ENCODE measurements at regions of chrX and their contacts with region 1.

Region 1: DNA sequence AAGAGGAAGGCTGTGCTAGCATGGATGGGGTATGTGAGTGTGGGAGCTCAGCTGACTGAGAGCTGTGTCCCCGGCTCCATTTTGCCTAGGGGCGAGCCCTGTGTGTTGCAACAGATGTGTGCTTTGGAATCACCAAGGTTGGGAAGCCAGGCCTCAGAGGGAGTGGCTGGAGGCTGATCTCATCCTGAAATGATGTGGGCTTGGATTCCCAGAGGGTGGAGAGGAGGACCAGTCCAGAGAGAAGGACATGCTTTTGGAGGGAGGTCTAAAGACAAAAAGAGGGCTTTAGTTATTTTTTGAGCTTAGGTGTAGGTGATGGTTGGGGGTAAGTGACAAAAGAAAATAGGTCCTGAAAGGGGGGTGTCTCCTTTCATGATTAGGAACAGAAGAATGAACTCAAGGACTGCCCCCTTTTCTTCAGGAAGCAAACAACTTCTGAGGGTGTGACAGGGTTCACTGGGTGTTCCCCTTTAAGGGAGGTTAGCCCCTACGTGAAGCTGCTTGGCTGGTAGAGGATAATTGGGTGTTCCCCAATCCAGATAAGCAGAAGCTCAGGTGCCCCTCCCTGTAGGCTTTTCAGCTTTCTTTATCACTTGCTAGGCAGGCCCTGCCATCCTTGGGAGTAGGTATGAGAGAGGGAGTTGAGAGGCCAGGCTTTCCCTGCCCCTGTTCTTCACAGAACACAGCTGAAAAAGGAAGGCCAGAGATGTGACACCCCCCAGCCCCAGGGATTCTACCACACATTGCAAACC is 44.0 kb downstream of the RTL9 start:
- DNase-seq: peak; percentile 77 to 86
- H3K4me3 ChIP-seq: peak overlapping the region; percentile 6; the same call in 1 of the 2 replicates
- H3K27ac ChIP-seq: peak overlapping the region; percentile 70
- H3K4me1 ChIP-seq: peaks cover 60% of the 10 kb centered on the region
- H3K27me3 ChIP-seq: no peaks in the 10 kb centered on the region
- CTCF ChIP-seq: no peak

Region 2: DNA sequence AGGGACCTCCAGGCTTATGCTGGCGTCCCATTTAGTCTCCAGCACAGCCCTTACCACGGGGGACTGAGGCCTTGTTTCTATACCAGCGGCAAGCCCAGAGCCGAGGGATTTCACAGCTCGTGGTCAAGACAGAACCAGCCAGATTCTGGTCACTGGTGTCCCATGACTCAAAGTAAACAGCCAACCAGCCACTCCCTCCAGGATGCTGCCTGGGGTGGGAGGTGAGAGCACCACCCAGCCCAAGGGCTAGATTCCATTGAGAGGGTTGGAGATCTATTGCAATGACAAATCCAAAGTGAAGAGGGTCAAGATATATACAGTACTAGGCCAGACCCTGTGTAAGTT is 228.8 kb before region 1 on chrX:
- CTCF ChIA-PET with region 1: no interaction called
- POLR2A ChIA-PET with region 1: no interaction called
- intact Hi-C with region 1: loop called (anchors 1 kb)
- DNase-seq: peak; percentile 77 to 79
- H3K4me3 ChIP-seq: no peak overlapping the region
- H3K27ac ChIP-seq: peak overlapping the region; percentile 44
- H3K4me1 ChIP-seq: peaks cover 27% of the 10 kb centered on the region
- H3K27me3 ChIP-seq: no peaks in the 10 kb centered on the region
- CTCF ChIP-seq: no peak

Region 3: GRCh38 chrX:110284159-110284558 is 118.5 kb before region 1 on chrX:
- CTCF ChIA-PET with region 1: no interaction called
- POLR2A ChIA-PET with region 1: interaction called, 5 read pairs
- intact Hi-C with region 1: loop called (anchors 1 kb)
- DNase-seq: peak in 1 of 2 experiments; percentile 59
- H3K4me3 ChIP-seq: no peak overlapping the region
- H3K27ac ChIP-seq: peak overlapping the region; percentile 29; the same call in 1 of the 2 replicates
- H3K4me1 ChIP-seq: peaks cover 27% of the 10 kb centered on the region
- H3K27me3 ChIP-seq: no peaks in the 10 kb centered on the region
- CTCF ChIP-seq: no peak

Region 4: GRCh38 chrX:110519906-110520452 is 117.3 kb after region 1 on chrX:
- CTCF ChIA-PET with region 1: no interaction called
- POLR2A ChIA-PET with region 1: no interaction called
- intact Hi-C with region 1: no loop called
- DNase-seq: no peak
- H3K4me3 ChIP-seq: no peak overlapping the region
- H3K27ac ChIP-seq: no peak overlapping the region
- H3K4me1 ChIP-seq: no peaks in the 10 kb centered on the region
- H3K27me3 ChIP-seq: no peaks in the 10 kb centered on the region
- CTCF ChIP-seq: no peak

Measured in PC-9 (cell line).